Activated CD4-positive, alpha-beta T cell treated with anti-CD3 and anti-CD28 coated beads, Interleukin-2, amount 10 ng/mL, durations not matched to agents 24 days and 14 days (primary cell): ENCODE measurements at regions of chr20 and their contacts with region 1.

Region 1: DNA sequence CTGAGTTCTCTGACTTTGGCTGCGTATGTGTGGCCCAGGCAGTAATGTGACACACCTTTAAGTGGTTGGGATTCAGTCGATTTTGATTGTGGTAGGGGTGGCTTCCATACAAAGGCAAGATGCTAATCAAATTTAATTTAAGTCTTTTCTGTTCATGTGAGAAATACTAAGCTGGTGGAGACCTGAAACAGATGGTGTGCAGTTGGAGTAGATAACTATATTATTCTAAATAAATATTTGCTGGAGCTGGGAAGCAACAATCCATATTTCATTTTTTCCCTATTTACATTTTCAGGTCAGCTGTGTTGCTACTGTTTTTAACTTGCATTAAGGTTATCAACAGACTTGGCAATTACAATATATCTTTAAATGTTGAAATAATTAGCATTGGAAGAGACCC is 67.4 kb upstream of the C20orf144 start:
- DNase-seq: no peak
- H3K4me3 Mint-ChIP-seq: no peak overlapping the region
- H3K27ac Mint-ChIP-seq: no peak overlapping the region
- H3K4me1 Mint-ChIP-seq: peaks cover 8% of the 10 kb centered on the region
- H3K27me3 Mint-ChIP-seq: no peaks in the 10 kb centered on the region

Region 2: GRCh38 chr20:33515569-33516216 is 79.0 kb before region 1 on chr20:
- intact Hi-C with region 1: loop called (anchors 10 kb)
- DNase-seq: no peak
- H3K4me3 Mint-ChIP-seq: no peak overlapping the region
- H3K27ac Mint-ChIP-seq: no peak overlapping the region
- H3K4me1 Mint-ChIP-seq: peaks cover 7% of the 10 kb centered on the region
- H3K27me3 Mint-ChIP-seq: no peaks in the 10 kb centered on the region

Region 3: DNA sequence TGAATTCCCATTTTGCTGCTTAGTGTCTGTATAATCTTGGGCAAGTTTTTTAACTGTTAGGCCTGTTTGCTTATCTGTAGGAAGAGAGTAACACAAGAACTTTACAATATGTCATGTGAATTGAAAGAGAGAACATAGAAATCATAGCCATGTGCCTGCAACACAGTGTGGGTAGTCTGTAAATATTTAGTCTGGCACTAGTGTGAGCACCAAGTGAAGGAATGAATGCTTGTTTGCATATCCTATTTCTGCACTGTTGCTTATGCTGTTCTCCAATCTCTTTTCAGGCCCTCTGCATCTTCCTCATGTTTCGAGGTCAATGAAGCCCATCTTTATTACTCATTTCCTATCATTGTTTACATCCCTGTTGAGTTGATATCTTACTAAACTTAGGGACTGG is 55.6 kb before region 1 on chr20:
- intact Hi-C with region 1: no loop called
- DNase-seq: no peak
- H3K4me3 Mint-ChIP-seq: no peak overlapping the region
- H3K27ac Mint-ChIP-seq: no peak overlapping the region
- H3K4me1 Mint-ChIP-seq: no peaks in the 10 kb centered on the region
- H3K27me3 Mint-ChIP-seq: no peaks in the 10 kb centered on the region